Right ventricle myocardium superior (tissue), 1 donor: ENCODE measurements at regions of chr14 and their contacts with region 1.

Region 1: GRCh38 chr14:57317316-57317715 is 48.5 kb downstream of the AP5M1 start:
- DNase-seq: peak; percentile 41
- ATAC-seq: peak; percentile 71

Region 2: DNA sequence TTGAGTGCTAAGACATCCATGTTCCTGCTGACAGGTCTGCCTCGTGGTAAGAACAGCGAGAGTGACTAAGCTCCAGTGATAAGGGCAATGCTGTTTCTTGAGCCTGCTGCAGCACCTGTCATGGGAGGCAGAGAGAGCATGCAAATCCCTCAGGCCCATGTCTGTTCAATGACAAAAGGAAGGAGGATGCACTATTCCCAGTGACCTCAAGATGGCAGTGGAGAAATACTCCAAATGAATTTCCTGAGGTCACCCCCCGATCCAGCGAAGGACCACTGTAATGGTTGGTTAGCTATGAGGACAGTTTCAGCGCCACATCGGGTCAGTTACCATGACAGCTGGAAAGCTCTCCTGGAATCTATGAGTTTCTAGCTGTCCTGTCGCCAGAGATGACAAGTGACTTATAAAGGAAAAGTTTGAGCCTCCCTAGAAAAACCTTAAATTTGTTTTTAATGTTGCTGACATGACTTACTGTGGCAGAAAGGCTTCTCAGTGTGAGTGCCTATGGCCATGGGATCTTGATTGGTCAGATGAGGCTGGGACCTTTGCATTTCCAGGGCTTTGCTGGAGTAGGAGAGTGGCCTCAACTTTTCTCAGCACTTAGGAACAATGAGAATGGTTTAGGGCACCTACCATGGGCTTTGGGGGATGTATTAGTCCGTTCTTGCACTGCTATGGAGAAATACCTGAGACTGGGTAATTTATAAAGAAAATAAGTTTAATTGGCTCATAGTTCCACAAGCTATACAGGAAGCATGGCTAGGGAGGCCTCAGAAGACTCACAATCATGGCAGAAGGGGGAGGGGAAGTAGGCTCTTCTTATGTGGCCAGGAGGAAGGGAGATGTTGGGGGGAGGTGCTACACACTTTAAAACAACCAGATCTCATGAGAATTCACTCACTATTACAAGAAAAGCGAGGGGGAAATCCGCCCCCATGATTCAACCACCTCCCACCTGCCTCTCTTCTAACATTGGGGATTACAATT is 825.7 kb before region 1 on chr14:
- intact Hi-C with region 1: loop called (anchors 5 kb)
- DNase-seq: no peak
- ATAC-seq: peak; percentile 72